Activated T-helper 2 cell treated with anti-CD3 and anti-CD28 coated beads, Interferon-gamma antibody, Interleukin-2, Interleukin-4, amounts not matched to agents 10 μg/mL and 5 μg/mL and 100 μg/mL, durations not matched to agents 14 hours and 24 hours and 36 hours (primary cell): ENCODE measurements at regions of chr6 and their contacts with region 1.

Region 1: DNA sequence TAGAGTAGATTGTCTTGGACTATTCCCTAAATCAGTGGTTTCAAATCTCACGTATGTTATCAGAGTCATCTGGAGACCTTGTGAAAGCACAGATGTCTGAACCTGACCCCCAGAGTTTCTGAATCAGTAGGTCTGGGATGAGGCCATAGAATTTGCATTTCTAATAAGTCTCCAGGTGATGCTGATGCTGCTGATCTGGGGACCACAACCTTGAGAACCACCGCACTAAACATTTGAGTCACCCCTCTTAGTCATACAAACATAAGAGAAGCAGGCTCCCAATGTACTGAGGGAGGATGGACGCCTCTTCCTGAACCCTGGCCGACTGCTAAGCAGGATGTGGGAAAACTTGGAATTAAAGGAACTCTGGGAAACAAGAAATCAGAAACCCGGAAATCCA is 187.8 kb upstream of the PRDM1 start:
- DNase-seq: no peak
- H3K4me3 Mint-ChIP-seq: no peak overlapping the region
- H3K27ac Mint-ChIP-seq: no peak overlapping the region
- H3K4me1 Mint-ChIP-seq: peaks cover 30% of the 10 kb centered on the region
- H3K27me3 Mint-ChIP-seq: no peaks in the 10 kb centered on the region

Region 2: GRCh38 chr6:105733565-105734162 is 164.6 kb before region 1 on chr6:
- intact Hi-C with region 1: loop called (anchors 5 kb)
- DNase-seq: no peak
- H3K4me3 Mint-ChIP-seq: no peak overlapping the region
- H3K27ac Mint-ChIP-seq: no peak overlapping the region
- H3K4me1 Mint-ChIP-seq: peaks cover 21% of the 10 kb centered on the region
- H3K27me3 Mint-ChIP-seq: peaks cover 2% of the 10 kb centered on the region

Region 3: GRCh38 chr6:105786890-105787655 is 111.2 kb before region 1 on chr6:
- intact Hi-C with region 1: loop called (anchors 1 kb)
- DNase-seq: peak; percentile 36
- H3K4me3 Mint-ChIP-seq: no peak overlapping the region
- H3K27ac Mint-ChIP-seq: peak overlapping the region; percentile 44
- H3K4me1 Mint-ChIP-seq: peaks cover 75% of the 10 kb centered on the region
- H3K27me3 Mint-ChIP-seq: no peaks in the 10 kb centered on the region

Region 4: GRCh38 chr6:105844275-105844883 is 53.9 kb before region 1 on chr6:
- intact Hi-C with region 1: no loop called
- DNase-seq: no peak
- H3K4me3 Mint-ChIP-seq: no peak overlapping the region
- H3K27ac Mint-ChIP-seq: no peak overlapping the region
- H3K4me1 Mint-ChIP-seq: no peaks in the 10 kb centered on the region
- H3K27me3 Mint-ChIP-seq: peaks cover 8% of the 10 kb centered on the region

Region 5: DNA sequence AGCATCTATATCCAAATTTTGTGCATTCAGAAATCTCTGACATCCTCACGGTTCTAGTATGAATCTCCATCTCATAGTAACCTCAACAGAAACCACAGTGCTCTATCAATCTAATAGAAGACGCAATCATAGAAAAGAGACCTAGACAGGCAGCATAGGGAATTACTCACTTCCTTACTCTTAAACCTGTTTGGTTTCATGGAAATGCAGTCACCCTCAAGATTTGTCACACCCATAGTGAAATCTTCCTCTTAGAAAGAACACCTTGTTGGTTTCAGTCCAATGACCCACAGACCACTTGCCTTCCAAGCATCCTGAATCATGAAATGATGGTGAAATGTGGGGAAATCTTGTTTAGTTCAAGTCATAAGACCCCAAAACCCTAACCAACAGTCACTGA is 21.8 kb after region 1 on chr6:
- intact Hi-C with region 1: loop called (anchors 1 kb)
- DNase-seq: no peak
- H3K4me3 Mint-ChIP-seq: no peak overlapping the region
- H3K27ac Mint-ChIP-seq: no peak overlapping the region
- H3K4me1 Mint-ChIP-seq: peaks cover 18% of the 10 kb centered on the region
- H3K27me3 Mint-ChIP-seq: no peaks in the 10 kb centered on the region

Region 6: GRCh38 chr6:105992315-105992961 is 94.2 kb after region 1 on chr6:
- intact Hi-C with region 1: loop called (anchors 2 kb)
- DNase-seq: peak; percentile 89
- H3K4me3 Mint-ChIP-seq: peak overlapping the region; percentile 94
- H3K27ac Mint-ChIP-seq: peak overlapping the region; percentile 81
- H3K4me1 Mint-ChIP-seq: peaks cover 57% of the 10 kb centered on the region
- H3K27me3 Mint-ChIP-seq: peaks cover 23% of the 10 kb centered on the region

Region 7: DNA sequence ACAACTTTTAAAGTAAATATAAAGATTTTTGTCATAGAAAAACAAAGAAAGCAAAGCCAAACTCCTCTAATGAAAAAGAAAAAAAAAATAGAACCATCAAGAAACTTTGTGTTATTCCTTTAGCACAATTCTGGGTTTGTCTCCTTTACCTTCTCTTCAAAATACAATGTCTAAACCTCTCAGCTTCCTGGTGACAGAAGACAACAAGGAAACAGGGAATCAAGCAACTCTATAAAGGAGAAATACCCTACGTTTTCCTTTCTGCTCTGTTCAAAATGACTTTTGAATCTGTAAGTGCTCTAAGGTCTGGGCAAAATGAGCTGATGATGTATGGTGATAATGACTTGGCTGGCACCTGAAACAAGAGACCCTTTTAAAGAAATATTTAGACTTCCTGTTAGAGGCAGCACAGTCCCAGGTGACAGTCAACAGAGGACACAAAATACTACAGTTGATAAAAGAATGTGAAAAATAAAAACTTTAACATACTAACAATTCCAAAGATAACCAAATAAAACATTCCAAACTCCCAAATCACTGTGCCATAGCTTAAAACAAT is 289.2 kb after region 1 on chr6:
- intact Hi-C with region 1: loop called (anchors 1 kb)
- DNase-seq: no peak
- H3K4me3 Mint-ChIP-seq: peak overlapping the region; percentile 48
- H3K27ac Mint-ChIP-seq: peak overlapping the region; percentile 86
- H3K4me1 Mint-ChIP-seq: peaks cover 68% of the 10 kb centered on the region
- H3K27me3 Mint-ChIP-seq: no peaks in the 10 kb centered on the region